Adrenal gland (tissue), 19 donors: ENCODE measurements at regions of chr19 and their contacts with region 1.

Region 1: DNA sequence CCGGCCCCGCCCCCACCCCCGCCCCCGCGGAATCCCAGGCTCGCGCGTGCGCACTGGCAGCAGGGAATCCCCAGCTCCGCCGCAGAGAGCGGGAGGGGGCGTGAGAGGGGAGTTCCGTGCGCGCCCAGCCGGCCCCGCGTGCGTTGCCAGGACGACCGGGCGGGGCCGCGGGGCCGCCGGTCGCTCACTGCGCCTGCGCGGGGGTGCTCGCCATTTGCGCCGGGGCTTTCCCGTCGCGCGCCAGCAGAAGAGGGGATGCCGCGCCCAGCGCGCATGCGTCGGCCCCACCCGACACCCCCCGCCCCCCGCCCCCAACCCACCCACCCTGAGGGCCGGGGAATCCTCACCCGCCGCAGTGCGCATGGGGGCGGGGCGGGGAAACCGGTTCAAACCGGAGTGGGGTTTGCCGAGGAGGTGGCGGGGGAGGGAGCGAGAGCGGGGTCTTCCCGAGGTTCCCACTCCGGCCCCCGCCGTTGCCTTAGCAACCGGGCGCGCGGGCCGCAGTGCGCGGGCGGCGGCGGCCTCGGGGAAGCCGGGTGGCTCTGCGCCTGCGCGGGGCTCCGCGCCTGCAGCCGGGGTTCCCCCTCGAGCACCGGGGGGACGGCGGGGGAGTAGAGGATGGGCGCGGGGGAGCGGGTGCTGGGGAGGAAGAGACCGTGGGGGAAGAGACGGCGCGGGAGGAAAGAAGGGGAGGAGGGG is 15.1 kb downstream of the CCDC124 start:
- DNase-seq: peak; percentile 91 to 94 (median 92)
- H3K4me3 ChIP-seq: peak overlapping the region in 3 of 4 donors; percentile 44 to 84 (median 60)
- H3K27ac ChIP-seq: peak overlapping the region in 1 of 5 donors; percentile 18
- H3K4me1 ChIP-seq: peaks cover 0 to 49% of the 10 kb centered on the region in 2 donors
- H3K27me3 ChIP-seq: peaks cover 27% of the 10 kb centered on the region
- CTCF ChIP-seq: no peak
- POLR2A ChIP-seq: no peak

Region 2: DNA sequence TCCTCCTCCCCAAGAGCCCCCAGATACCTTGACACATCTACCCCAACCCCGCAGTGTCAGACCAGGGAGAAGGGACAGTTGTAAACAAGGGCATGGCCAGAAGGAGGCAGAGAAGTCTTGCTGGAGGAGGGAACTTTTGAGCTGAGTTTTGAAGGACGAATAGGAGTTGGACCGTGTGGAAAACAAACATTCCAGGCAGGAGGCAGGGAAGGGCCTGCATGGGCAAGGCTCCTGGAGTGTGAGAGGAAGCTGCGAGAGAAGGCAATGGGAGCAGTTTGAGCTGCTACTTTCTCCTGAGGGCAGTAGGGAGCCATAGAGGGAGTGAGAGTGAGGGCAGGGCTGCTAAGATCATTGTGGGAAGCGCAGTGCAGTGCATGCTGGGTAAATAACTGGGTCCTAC is 115.5 kb after region 1 on chr19:
- intact Hi-C with region 1: loop called in 1 of 2 experiments (anchors 10 kb)
- DNase-seq: no peak
- H3K4me3 ChIP-seq: no peak overlapping the region
- H3K27ac ChIP-seq: no peak overlapping the region
- H3K4me1 ChIP-seq: peaks cover 0 to 3% of the 10 kb centered on the region in 2 donors
- H3K27me3 ChIP-seq: no peaks in the 10 kb centered on the region
- CTCF ChIP-seq: no peak
- POLR2A ChIP-seq: no peak